ENCODE measurements at regions of chr11 and their contacts with region 1.

Region 1: GRCh38 chr11:85941380-85941973 is 86.3 kb downstream of the CCDC83 start:
- DNase-seq: peak; percentile 40 to 65
- H3K4me3 ChIP-seq: no peak overlapping the region
- H3K27ac ChIP-seq: no peak overlapping the region
- H3K4me1 ChIP-seq: no peaks in the 10 kb centered on the region
- H3K27me3 ChIP-seq: no peaks in the 10 kb centered on the region
- CTCF ChIP-seq: peak in 5 of 7 experiments; percentile 42 to 69 (median 57)
- EP300 ChIP-seq: no peak
- POLR2A ChIP-seq: no peak

Region 2: DNA sequence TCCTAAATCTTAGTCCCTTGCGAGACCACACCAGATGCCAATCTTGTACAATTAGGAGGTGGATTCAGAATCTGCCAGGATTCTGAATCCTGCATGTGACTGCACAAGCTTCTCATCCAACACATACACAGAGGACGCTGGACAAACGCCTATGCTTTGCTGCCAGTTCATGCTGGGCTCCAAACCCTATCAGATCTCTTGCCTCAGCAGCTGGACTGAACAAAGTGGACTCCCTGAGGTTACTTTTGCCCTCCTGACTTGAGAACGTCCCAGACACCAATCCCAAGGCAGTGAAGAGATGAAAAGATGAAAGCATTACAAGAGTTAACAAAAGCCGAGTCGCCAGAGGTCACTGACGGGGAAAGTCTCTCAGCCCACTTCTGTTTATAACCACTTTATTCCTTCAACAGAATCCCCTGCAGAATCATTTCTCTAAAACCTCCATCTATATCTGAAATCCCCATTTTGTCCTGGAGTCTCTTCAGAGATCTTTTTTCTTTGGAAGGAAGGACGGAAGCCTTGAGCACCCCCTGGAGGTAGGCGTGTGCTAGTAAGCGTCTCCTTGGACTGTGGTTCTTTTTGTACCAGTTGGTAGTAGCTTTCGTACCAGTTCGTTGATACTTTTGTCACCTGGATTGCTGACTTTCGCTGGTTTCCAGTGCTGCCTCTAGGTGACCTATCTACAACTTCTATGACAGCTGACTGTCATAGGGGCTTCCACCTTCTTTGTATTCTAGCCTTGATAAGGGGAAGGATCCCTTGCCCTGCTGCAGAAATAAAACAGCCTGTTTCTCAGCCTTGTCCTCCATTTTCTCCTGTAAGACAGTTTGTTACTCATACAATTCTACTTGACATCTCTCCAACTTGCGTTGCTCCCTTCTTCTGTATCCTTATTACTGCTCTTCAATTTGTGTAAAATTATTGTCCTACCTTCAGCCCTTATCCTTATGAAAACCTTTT is 276.9 kb after region 1 on chr11:
- intact Hi-C with region 1: loop called (anchors 10 kb)
- DNase-seq: peak; percentile 64 to 90
- H3K4me3 ChIP-seq: peak overlapping the region; percentile 6 to 33 (median 22)
- H3K27ac ChIP-seq: peak overlapping the region in 1 of 5 donors; percentile 7
- H3K4me1 ChIP-seq: peaks cover 0 to 12% (median 9%) of the 10 kb centered on the region in 4 donors
- H3K27me3 ChIP-seq: no peaks in the 10 kb centered on the region
- CTCF ChIP-seq: peak in 5 of 7 experiments; percentile 44 to 85 (median 80)
- EP300 ChIP-seq: no peak
- POLR2A ChIP-seq: no peak